ENCODE measurements at regions of chr10 and their contacts with region 1.

Region 1: GRCh38 chr10:60944159-60944909 is at the start of gene RHOBTB1:
- DNase-seq: peak; percentile 79
- H3K4me3 ChIP-seq: peak within 1 kb of the TSS; percentile 64 to 86 (median 83)
- H3K27ac ChIP-seq: peak within 1 kb of the TSS; percentile 91 to 97 (median 95)
- H3K4me1 ChIP-seq: peaks cover 0 to 24% (median 13%) of the 10 kb centered on the region in 4 donors
- H3K27me3 ChIP-seq: no peaks in the 10 kb centered on the region
- CTCF ChIP-seq: no peak
- EP300 ChIP-seq: no peak
- POLR2A ChIP-seq: peak; percentile 83
- total RNA-seq, gene RHOBTB1: 4.0 to 13.1 (median 9.0) TPM

Region 2: DNA sequence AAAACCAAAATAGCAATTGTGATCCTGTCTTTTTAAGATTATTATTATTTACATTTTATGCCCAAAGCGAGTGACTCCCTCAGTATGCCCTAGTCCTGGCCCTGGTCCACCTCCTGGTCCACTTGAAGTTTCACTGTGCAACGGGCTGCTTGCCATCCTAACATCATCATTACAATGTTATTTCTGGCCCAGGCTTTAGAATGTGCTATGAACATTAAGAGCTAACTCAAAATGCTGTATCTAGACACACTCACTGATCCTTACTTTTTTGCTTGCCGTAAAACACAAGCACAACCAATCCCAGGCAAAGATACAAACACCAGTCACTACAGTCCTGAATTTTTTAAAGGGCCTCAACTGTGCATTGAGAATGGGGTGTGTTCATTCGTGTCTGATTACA is 38.8 kb before region 1 on chr10:
- in situ Hi-C with region 1: no loop called
- intact Hi-C with region 1: loop called (anchors 5 kb)
- DNase-seq: peak; percentile 22
- H3K4me3 ChIP-seq: no peak overlapping the region
- H3K27ac ChIP-seq: peak overlapping the region in 3 of 4 donors; percentile 8 to 64 (median 56)
- H3K4me1 ChIP-seq: peaks cover 0 to 17% (median 2%) of the 10 kb centered on the region in 4 donors
- H3K27me3 ChIP-seq: no peaks in the 10 kb centered on the region
- CTCF ChIP-seq: no peak
- EP300 ChIP-seq: no peak
- POLR2A ChIP-seq: no peak

Region 3: GRCh38 chr10:61404751-61405150 is 460.4 kb after region 1 on chr10:
- in situ Hi-C with region 1: no loop called
- intact Hi-C with region 1: no loop called
- DNase-seq: no peak
- H3K4me3 ChIP-seq: no peak overlapping the region
- H3K27ac ChIP-seq: no peak overlapping the region
- H3K4me1 ChIP-seq: peaks cover 0 to 4% (median 0%) of the 10 kb centered on the region in 4 donors
- H3K27me3 ChIP-seq: no peaks in the 10 kb centered on the region
- CTCF ChIP-seq: no peak
- EP300 ChIP-seq: no peak
- POLR2A ChIP-seq: no peak

Measured in transverse colon (tissue), 4 donors.